T-cell (primary cell): ENCODE measurements at regions of chrX and their contacts with region 1.

Region 1: DNA sequence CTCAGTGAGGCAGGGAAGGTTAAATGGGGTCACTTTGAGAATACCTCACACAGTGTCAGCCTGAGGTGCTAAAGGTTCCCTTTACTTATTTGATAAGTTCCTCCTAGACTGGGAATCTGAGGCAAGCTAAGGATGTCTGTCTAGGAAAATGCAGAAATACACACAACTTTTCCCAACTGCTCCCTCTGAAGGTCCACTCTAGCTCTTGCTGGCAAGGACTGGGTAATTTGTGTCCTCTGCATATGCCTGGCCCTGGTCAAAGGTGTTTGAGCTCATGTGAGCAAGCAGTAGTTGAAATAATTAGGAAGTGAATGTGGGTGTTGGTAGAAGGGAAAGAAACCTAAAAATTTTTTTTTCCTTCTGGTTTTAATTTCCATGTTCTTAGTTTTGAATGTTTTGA is 21.3 kb downstream of the TXLNG start:
- DNase-seq: no peak
- ATAC-seq: peak in 1 of 4 experiments; percentile 24
- H3K4me3 ChIP-seq: no peak overlapping the region
- H3K4me3 Mint-ChIP-seq: no peak overlapping the region
- H3K27ac ChIP-seq: no peak overlapping the region
- H3K27ac Mint-ChIP-seq: no peak overlapping the region
- H3K4me1 ChIP-seq: no peaks in the 10 kb centered on the region
- H3K4me1 Mint-ChIP-seq: peaks cover 28 to 40% (median 29%) of the 10 kb centered on the region in 3 donors
- H3K27me3 ChIP-seq: no peaks in the 10 kb centered on the region
- H3K27me3 Mint-ChIP-seq: no peaks in the 10 kb centered on the region

Region 2: DNA sequence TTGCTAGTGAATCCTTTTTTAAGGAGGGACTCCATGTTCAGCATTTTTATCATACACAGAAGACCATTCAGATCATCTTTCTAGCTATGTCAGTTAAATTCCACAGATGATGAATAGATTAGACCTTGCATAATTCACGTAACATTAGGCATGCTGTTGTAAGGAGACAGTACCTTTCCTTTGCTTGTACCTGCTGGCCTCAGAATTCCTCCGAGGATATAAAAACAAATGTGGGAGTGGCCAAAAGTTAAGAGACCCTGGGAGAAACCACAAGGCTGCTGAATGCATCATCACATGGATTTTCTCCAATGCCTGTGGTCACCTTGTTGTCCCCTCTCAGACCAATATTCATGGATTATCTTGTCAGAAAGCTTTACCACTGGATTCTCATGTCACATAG is 438.9 kb before region 1 on chrX:
- CTCF ChIA-PET with region 1: no interaction called
- POLR2A ChIA-PET with region 1: no interaction called
- DNase-seq: no peak
- ATAC-seq: no peak
- H3K4me3 ChIP-seq: no peak overlapping the region
- H3K4me3 Mint-ChIP-seq: no peak overlapping the region
- H3K27ac ChIP-seq: no peak overlapping the region
- H3K27ac Mint-ChIP-seq: no peak overlapping the region
- H3K4me1 ChIP-seq: no peaks in the 10 kb centered on the region
- H3K4me1 Mint-ChIP-seq: no peaks in the 10 kb centered on the region
- H3K27me3 ChIP-seq: no peaks in the 10 kb centered on the region
- H3K27me3 Mint-ChIP-seq: peaks cover 0 to 14% of the 10 kb centered on the region in 2 donors

Region 3: GRCh38 chrX:16839852-16840460 is 32.4 kb after region 1 on chrX:
- CTCF ChIA-PET with region 1: no interaction called
- POLR2A ChIA-PET with region 1: interaction called in 1 of 2 experiments, 10 read pairs
- DNase-seq: no peak
- ATAC-seq: no peak
- H3K4me3 ChIP-seq: no peak overlapping the region
- H3K4me3 Mint-ChIP-seq: no peak overlapping the region
- H3K27ac ChIP-seq: no peak overlapping the region
- H3K27ac Mint-ChIP-seq: no peak overlapping the region
- H3K4me1 ChIP-seq: no peaks in the 10 kb centered on the region
- H3K4me1 Mint-ChIP-seq: peaks cover 0 to 6% (median 0%) of the 10 kb centered on the region in 3 donors
- H3K27me3 ChIP-seq: no peaks in the 10 kb centered on the region
- H3K27me3 Mint-ChIP-seq: no peaks in the 10 kb centered on the region